SK-N-SH (cell line): ENCODE measurements at regions of chr5 and their contacts with region 1.

Region 1: DNA sequence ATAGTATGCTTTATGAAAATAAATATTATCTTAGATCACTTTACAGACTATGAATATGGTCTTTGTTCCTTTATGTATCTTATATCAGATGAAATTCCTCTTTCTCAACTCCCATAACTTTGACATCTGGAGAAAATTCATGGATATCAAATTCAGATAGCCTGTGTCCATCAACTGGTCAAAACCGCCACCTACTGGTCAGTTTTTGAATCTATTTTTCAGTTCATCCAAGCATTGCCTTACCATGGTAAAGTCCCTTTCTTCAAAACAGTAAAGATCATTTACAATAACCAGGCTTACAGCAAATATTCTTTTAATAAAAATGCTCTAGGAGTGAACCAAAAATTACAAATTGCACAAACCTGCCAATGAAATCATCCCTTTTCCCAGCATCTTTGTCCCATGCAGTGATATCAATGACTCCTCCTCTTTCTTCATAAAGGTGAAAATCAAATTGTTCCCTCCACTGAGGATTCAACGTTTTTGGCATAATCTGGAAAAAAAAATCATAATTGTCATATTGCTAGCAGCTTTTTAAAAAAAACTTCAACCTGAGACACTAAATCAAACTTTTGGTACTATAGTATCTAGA is 290.5 kb downstream of the SLF1 start:
- DNase-seq: peak; percentile 43
- H3K4me3 ChIP-seq: no peak overlapping the region; a peak in 1 of 4 replicates
- H3K27ac ChIP-seq: no peak overlapping the region
- H3K4me1 ChIP-seq: no peaks in the 10 kb centered on the region
- H3K27me3 ChIP-seq: no peaks in the 10 kb centered on the region
- CTCF ChIP-seq: peak; percentile 81
- EP300 ChIP-seq: no peak
- RAD21 ChIP-seq: peak; percentile 78

Region 2: DNA sequence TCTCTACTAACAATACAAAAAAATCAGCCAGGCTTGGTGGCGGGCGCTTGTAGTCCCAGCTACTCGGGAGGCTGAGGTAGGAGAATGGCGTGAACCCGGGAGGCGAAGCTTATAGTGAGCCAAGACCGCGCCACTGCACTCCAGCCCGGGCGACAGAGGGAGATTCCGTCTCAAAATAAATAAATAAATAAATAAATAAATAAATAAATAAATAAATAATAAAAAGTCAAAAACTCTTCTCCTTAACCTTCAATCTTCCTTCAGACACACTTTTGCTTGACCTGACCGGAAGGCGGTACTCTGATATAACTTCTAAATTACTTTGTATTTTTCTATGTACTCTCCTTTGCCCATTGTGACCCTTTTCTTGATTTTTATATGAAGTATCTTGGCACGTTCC is 11.6 kb after region 1 on chr5:
- CTCF ChIA-PET with region 1: interaction called, 13 read pairs
- POLR2A ChIA-PET with region 1: no interaction called
- DNase-seq: no peak
- H3K4me3 ChIP-seq: no peak overlapping the region
- H3K27ac ChIP-seq: no peak overlapping the region
- H3K4me1 ChIP-seq: no peaks in the 10 kb centered on the region
- H3K27me3 ChIP-seq: no peaks in the 10 kb centered on the region
- CTCF ChIP-seq: no peak
- EP300 ChIP-seq: no peak
- RAD21 ChIP-seq: no peak

Region 3: DNA sequence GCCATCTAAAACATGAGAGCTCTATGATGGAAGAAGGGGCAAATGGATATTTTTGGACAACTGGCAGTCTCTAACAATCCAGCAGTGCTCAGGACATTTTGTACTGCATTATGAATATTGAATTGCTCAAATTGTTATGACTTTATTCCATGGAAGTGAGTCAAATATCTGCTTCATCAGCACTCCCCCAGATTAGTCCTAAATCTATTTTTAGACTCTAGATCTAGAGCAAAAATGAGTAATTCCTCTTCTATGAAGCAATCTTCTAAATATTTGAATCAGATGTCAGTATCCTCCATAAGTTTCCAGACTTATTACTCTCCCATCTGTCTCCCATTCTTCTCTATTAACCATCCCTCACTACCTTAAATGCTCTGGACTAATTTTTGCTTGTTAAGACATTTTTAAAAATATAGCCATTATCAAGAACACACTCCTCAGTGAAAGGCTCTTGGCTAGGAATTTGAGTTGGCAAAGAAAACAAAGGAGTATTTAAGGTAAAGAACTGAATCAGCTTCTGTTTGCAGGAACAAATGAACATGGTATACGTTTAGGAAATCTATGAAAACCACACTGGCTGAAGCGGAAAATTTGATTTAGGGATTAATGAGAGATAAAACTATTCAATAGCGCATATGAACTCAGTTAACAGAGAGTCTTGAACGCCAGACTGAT is 75.0 kb after region 1 on chr5:
- CTCF ChIA-PET with region 1: no interaction called
- POLR2A ChIA-PET with region 1: no interaction called
- DNase-seq: no peak
- H3K4me3 ChIP-seq: no peak overlapping the region
- H3K27ac ChIP-seq: no peak overlapping the region; a peak in 1 of 4 replicates
- H3K4me1 ChIP-seq: peaks cover 0 to 4% of the 10 kb centered on the region in 2 experiments; a peak in 1 of 4 replicates
- H3K27me3 ChIP-seq: no peaks in the 10 kb centered on the region
- CTCF ChIP-seq: no peak
- EP300 ChIP-seq: no peak
- RAD21 ChIP-seq: no peak